ENCODE measurements at regions of chr11 and their contacts with region 1.

Region 1: GRCh38 chr11:129750349-129751292 is 65.0 kb upstream of the TMEM45B start:
- DNase-seq: peak; percentile 73 to 88 (median 87)
- H3K4me3 ChIP-seq: peak overlapping the region in 5 of 7 experiments; percentile 26 to 67 (median 36)
- H3K27ac ChIP-seq: no peak overlapping the region
- H3K4me1 ChIP-seq: peaks cover 0 to 6% (median 4%) of the 10 kb centered on the region in 4 experiments
- H3K27me3 ChIP-seq: peaks cover 0 to 27% (median 11%) of the 10 kb centered on the region in 5 experiments

Region 2: GRCh38 chr11:129117595-129118350 is 632.8 kb before region 1 on chr11:
- CTCF ChIA-PET with region 1: interaction called, 10 read pairs
- POLR2A ChIA-PET with region 1: no interaction called
- DNase-seq: peak; percentile 62 to 85 (median 80)
- H3K4me3 ChIP-seq: no peak overlapping the region
- H3K27ac ChIP-seq: no peak overlapping the region
- H3K4me1 ChIP-seq: no peaks in the 10 kb centered on the region
- H3K27me3 ChIP-seq: no peaks in the 10 kb centered on the region

Region 3: DNA sequence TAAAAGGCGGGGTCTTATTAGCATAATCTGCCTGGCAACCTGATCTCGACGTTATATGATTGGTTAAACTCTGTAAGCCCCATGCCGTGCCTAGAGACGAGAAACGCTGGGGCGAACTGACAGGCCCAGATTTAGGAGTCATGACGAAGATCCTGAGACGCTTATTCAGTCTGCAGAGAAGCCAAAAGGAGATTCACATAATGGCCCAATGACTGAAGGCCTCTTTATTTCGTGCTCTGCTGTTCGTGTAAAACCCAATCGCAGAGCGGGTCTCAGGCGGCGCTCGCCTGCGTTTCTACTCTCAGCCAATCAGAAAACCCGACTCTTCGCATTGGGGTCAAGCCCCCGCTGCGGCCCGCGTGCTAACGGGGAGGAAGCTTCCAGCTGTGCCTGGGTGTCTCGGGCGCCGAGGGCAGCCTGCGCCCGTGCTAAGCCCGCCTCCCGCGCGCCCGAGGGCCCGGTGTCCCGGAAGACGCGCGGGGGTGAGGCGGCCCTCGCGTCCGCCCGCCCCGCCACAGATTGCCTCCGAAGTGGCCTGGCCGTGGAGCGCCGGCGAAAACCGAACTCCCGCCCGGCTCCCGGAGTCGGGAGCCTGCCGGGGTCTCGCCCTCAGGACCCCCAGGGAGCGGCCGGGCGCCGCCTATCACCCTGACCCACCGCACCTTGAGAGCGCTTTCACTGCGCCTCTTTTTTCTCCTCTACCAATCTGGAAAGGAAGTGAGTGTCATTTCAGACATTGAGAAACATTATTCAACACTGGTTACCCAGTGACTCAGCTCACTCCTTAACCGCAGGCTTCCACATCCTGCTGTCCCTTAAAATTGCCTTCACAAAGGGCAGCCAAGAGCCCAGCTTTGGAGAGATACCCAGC is 252.5 kb after region 1 on chr11:
- CTCF ChIA-PET with region 1: no interaction called
- POLR2A ChIA-PET with region 1: no interaction called
- DNase-seq: peak; percentile 97 to 98 (median 98)
- H3K4me3 ChIP-seq: peak overlapping the region; percentile 70 to 94 (median 84)
- H3K27ac ChIP-seq: peak overlapping the region; percentile 99 to 100
- H3K4me1 ChIP-seq: peaks cover 7 to 46% (median 35%) of the 10 kb centered on the region in 4 experiments
- H3K27me3 ChIP-seq: no peaks in the 10 kb centered on the region

Measured in common myeloid progenitor, CD34-positive (primary cell).